Breast epithelium (tissue), 4 donors: ENCODE measurements at regions of chr1 and their contacts with region 1.

Region 1: DNA sequence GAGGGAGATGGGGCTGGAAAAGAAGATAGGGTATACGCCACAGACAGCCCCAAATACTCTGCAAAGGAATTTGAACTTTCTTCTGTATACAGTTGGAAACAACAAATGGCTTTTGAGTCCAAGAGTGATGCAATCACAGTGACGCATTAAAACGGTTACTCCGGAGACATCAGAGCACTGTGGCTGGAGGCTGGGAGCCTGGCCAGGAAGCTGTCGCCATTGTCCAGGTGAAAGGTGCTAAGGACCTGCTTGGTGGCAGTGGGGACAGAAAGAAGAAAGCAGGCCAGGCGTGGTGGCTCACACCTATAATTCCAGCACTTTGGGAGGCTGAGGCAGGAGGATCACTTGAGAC is 4.2 kb downstream of the FLAD1 start:
- DNase-seq: no peak
- H3K4me3 ChIP-seq: no peak overlapping the region
- H3K27ac ChIP-seq: no peak overlapping the region
- H3K4me1 ChIP-seq: peaks cover 4 to 11% of the 10 kb centered on the region in 2 donors
- H3K27me3 ChIP-seq: no peaks in the 10 kb centered on the region
- CTCF ChIP-seq: no peak
- POLR2A ChIP-seq: no peak

Region 2: DNA sequence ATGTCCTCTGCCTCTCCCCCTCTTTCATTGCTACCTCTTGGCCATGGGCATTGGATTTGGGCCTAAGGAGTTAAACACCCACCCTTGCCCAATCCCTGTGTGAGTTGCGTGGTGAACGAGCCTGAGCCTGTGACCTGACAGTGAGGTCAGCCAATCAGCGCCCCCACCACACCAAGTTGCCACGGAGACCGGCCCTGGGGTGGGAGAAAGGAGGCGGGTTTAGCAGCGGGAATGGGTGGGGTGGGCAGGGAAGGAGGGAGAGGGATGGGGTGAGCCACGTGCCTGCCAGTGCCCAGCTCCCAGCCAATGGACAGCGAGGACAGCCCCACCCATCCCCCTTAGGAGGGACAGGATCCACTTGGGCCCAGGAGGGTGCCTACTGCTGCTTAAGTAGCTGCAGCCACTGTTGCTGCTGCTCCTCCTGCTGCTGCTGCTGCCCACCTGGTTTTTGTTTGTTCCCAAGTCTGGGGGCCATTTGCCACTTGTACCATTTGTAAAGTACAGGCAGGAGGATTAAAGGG is 24.7 kb after region 1 on chr1:
- intact Hi-C with region 1: loop called (anchors 1 kb)
- DNase-seq: peak in 1 of 2 donors; percentile 75
- H3K4me3 ChIP-seq: peak overlapping the region in 2 of 3 donors; percentile 63 to 73
- H3K27ac ChIP-seq: peak overlapping the region; percentile 98 to 99
- H3K4me1 ChIP-seq: peaks cover 26 to 27% of the 10 kb centered on the region in 2 donors
- H3K27me3 ChIP-seq: no peaks in the 10 kb centered on the region
- CTCF ChIP-seq: no peak
- POLR2A ChIP-seq: no peak